MCF 10A (cell line): ENCODE measurements at regions of chr1 and their contacts with region 1.

Region 1: GRCh38 chr1:237386362-237387143 is 344.6 kb downstream of the RYR2 start:
- DNase-seq: peak; percentile 54
- H3K4me3 Mint-ChIP-seq: no peak overlapping the region
- H3K27ac Mint-ChIP-seq: no peak overlapping the region
- H3K4me1 Mint-ChIP-seq: peaks cover 6% of the 10 kb centered on the region
- H3K27me3 Mint-ChIP-seq: peaks cover 16% of the 10 kb centered on the region
- CTCF ChIP-seq: peak; percentile 99

Region 2: DNA sequence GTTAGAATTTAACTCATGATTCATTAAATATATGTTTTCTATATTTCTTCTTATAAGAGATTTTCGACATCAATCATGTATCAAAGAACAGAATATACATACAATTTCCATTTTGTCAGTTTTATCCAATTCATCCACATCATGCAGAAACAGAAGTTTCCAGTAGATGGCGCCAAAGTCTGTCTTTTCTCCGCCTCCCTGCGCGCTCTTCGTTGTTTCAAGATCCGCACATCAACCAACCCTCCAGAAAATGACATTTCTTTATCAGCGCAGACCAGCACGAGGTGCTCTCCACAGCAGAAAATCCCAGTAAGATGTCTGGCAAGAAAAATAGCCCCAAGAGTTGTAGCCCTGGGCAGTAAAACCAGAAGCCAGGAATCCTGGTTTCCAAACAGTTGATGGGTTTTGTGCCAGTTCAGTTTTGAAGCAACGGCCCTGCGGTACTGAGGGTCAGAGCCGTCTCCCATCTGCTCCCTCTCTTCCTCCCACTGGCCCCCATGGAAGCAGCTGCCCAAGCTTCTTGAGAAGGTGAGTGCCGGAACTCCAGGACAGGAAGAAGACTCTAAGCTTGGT is 1282.8 kb before region 1 on chr1:
- CTCF ChIA-PET with region 1: interaction called, 6 read pairs
- POLR2A ChIA-PET with region 1: no interaction called
- intact Hi-C with region 1: loop called (anchors 5 kb)
- DNase-seq: peak; percentile 82
- H3K4me3 Mint-ChIP-seq: no peak overlapping the region
- H3K27ac Mint-ChIP-seq: no peak overlapping the region
- H3K4me1 Mint-ChIP-seq: peaks cover 7% of the 10 kb centered on the region
- H3K27me3 Mint-ChIP-seq: no peaks in the 10 kb centered on the region
- CTCF ChIP-seq: peak; percentile 99

Region 3: DNA sequence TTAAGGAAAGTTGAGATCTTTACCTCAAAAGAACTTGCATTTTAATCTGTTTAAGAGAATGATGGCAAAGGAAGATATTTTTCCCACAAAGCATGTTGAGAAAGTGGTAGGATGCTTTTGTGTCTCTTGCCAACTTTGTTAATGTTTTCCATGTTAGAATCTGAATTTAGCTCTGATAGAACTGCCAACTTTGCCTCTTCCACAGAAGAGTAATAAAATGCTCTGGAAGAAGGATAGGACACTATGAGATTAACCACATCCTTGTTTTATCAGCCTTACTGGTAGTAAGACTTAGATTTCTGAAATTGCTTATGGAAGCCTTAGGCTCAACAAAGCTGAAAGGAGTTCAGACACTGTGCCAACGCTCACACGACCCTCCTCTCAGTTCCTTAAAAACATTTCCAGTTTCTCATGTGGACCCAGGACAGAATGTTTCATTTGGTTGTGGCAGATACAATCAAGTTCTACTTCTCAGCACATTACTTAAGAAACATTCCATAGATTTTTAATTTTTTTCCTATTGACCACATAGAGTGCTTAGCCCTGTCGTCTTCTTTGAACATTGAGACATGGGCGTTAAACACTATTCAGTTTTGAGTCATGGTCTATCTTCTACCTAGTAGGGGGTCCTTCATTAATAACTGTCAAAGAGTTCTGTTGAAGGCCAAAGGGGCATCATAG is 532.5 kb before region 1 on chr1:
- CTCF ChIA-PET with region 1: interaction called, 13 read pairs
- POLR2A ChIA-PET with region 1: no interaction called
- intact Hi-C with region 1: no loop called
- DNase-seq: no peak
- H3K4me3 Mint-ChIP-seq: peak overlapping the region; percentile 28
- H3K27ac Mint-ChIP-seq: peak overlapping the region; percentile 86
- H3K4me1 Mint-ChIP-seq: peaks cover 13% of the 10 kb centered on the region
- H3K27me3 Mint-ChIP-seq: no peaks in the 10 kb centered on the region
- CTCF ChIP-seq: no peak

Region 4: GRCh38 chr1:236893626-236894545 is 492.7 kb before region 1 on chr1:
- CTCF ChIA-PET with region 1: interaction called, 29 read pairs
- POLR2A ChIA-PET with region 1: no interaction called
- intact Hi-C with region 1: loop called (anchors 5 kb)
- DNase-seq: no peak
- H3K4me3 Mint-ChIP-seq: no peak overlapping the region
- H3K27ac Mint-ChIP-seq: no peak overlapping the region
- H3K4me1 Mint-ChIP-seq: no peaks in the 10 kb centered on the region
- H3K27me3 Mint-ChIP-seq: no peaks in the 10 kb centered on the region
- CTCF ChIP-seq: no peak

Region 5: GRCh38 chr1:237124856-237125462 is 261.6 kb before region 1 on chr1:
- CTCF ChIA-PET with region 1: interaction called, 7 read pairs
- POLR2A ChIA-PET with region 1: no interaction called
- intact Hi-C with region 1: loop called (anchors 10 kb)
- DNase-seq: peak; percentile 65
- H3K4me3 Mint-ChIP-seq: no peak overlapping the region
- H3K27ac Mint-ChIP-seq: no peak overlapping the region
- H3K4me1 Mint-ChIP-seq: no peaks in the 10 kb centered on the region
- H3K27me3 Mint-ChIP-seq: peaks cover 13% of the 10 kb centered on the region
- CTCF ChIP-seq: peak; percentile 80

Region 6: GRCh38 chr1:237405912-237406311 is 19.4 kb after region 1 on chr1:
- CTCF ChIA-PET with region 1: interaction called, 22 read pairs
- POLR2A ChIA-PET with region 1: no interaction called
- intact Hi-C with region 1: no loop called
- DNase-seq: no peak
- H3K4me3 Mint-ChIP-seq: no peak overlapping the region
- H3K27ac Mint-ChIP-seq: no peak overlapping the region
- H3K4me1 Mint-ChIP-seq: no peaks in the 10 kb centered on the region
- H3K27me3 Mint-ChIP-seq: no peaks in the 10 kb centered on the region
- CTCF ChIP-seq: no peak

Region 7: DNA sequence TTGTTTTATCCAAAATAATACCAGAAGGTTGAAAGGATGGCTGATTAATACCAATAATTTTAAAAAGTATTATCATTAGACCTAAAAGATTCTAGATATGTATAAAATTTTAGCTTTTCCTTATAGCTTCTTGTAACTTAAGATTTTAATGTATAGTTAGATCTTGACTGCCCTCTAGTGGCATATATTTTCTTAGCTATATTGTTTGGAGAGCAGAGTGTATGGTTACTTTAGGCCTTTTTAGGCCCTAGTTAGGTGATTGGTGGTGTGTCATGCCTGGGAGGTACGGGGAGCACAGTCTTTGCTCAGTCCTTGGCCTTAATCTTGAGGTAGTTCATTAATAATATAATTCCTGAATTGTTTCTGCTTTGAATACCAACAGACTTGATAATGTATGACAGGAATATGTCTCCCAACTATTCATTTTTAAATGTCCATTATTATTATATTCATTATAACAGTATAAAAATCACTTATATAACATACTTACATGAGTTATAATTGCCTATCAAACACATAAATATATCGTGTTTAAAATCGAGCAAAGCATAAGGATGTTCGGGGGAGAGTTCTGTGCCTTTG is 175.8 kb after region 1 on chr1:
- CTCF ChIA-PET with region 1: interaction called, 31 read pairs
- POLR2A ChIA-PET with region 1: interaction called, 6 read pairs
- intact Hi-C with region 1: loop called (anchors 1 kb)
- DNase-seq: peak; percentile 89
- H3K4me3 Mint-ChIP-seq: no peak overlapping the region
- H3K27ac Mint-ChIP-seq: no peak overlapping the region
- H3K4me1 Mint-ChIP-seq: no peaks in the 10 kb centered on the region
- H3K27me3 Mint-ChIP-seq: no peaks in the 10 kb centered on the region
- CTCF ChIP-seq: peak; percentile 79